Naive thymus-derived CD4-positive, alpha-beta T cell (primary cell): ENCODE measurements at regions of chr3 and their contacts with region 1.

Region 1: DNA sequence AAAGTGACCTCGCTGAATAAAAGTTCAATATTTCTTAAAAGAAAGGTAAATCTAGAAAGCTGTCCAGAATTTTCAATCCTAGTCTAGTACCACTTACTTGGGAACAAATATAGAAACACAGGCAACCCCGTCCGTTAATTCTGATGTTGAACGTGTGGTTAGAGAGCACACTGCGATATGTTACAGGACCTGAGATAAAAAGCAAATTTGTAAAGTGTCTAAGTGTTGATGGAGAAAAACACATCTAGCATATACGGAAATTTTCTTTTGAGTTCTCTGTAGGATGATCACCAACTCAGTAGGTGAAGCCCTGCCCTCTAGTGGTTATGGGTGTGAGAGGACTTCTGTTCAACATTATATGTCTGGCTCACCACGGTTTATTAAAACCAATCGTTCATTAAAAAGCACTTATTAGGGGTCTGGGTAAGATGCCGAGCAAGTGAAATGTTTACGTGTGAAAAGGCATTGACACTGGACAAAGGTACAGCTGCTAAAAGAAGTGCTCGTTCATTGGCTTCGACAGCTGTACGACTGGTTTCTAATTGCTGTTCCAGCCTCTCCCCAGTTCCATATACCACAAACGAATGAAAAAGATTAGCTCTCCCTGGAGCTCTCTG is 1.0 kb upstream of the ATP2C1 start:
- DNase-seq: peak in 8 of 9 donors; percentile 55 to 82 (median 76)
- ATAC-seq: peak; percentile 77
- H3K4me3 ChIP-seq: peak overlapping the region; percentile 96
- H3K4me3 Mint-ChIP-seq: peak overlapping the region; percentile 94 to 99 (median 98)
- H3K27ac ChIP-seq: peak overlapping the region; percentile 93
- H3K27ac Mint-ChIP-seq: peak overlapping the region; percentile 95 to 100 (median 99)
- H3K4me1 ChIP-seq: peaks cover 5 to 14% of the 10 kb centered on the region in 2 donors
- H3K4me1 Mint-ChIP-seq: peaks cover 25 to 45% (median 37%) of the 10 kb centered on the region in 7 donors
- H3K27me3 ChIP-seq: no peaks in the 10 kb centered on the region
- H3K27me3 Mint-ChIP-seq: peaks cover 0 to 4% (median 0%) of the 10 kb centered on the region in 5 donors

Region 2: DNA sequence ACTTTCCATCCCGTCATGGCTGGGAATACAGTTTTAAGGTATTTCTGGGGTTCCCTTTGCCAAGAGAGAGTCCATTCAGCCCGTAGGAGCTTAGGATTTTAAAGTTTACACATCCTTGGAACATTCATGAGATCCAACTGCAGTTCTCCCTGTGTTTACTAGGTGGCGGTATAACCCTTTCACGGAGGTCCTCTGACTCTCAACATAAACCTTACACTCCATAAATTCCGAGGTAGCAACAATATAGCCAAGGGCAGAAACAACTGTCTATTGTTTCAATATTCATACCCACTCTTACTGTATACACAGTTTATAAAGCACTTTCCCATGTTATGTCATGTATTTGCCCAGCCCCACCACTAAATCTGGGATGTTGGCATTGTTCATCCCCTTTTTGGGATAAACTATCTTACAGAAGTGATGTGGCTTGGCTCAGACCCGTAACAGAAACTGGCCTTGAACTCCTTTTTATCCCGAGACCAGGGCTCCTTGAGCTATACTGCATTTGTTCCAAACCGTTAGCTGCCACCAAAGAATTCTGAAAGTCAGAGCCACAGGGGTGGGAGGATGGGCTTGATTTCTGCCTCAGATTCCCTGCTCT is 616.6 kb before region 1 on chr3:
- CTCF ChIA-PET with region 1: no interaction called
- POLR2A ChIA-PET with region 1: no interaction called
- intact Hi-C with region 1: loop called (anchors 1 to 5 kb)
- DNase-seq: peak in 3 of 9 donors; percentile 2 to 4 (median 2)
- ATAC-seq: peak; percentile 46
- H3K4me3 ChIP-seq: no peak overlapping the region
- H3K4me3 Mint-ChIP-seq: no peak overlapping the region
- H3K27ac ChIP-seq: no peak overlapping the region
- H3K27ac Mint-ChIP-seq: no peak overlapping the region
- H3K4me1 ChIP-seq: no peaks in the 10 kb centered on the region
- H3K4me1 Mint-ChIP-seq: no peaks in the 10 kb centered on the region
- H3K27me3 ChIP-seq: no peaks in the 10 kb centered on the region
- H3K27me3 Mint-ChIP-seq: peaks cover 8 to 48% (median 36%) of the 10 kb centered on the region in 5 donors

Region 3: DNA sequence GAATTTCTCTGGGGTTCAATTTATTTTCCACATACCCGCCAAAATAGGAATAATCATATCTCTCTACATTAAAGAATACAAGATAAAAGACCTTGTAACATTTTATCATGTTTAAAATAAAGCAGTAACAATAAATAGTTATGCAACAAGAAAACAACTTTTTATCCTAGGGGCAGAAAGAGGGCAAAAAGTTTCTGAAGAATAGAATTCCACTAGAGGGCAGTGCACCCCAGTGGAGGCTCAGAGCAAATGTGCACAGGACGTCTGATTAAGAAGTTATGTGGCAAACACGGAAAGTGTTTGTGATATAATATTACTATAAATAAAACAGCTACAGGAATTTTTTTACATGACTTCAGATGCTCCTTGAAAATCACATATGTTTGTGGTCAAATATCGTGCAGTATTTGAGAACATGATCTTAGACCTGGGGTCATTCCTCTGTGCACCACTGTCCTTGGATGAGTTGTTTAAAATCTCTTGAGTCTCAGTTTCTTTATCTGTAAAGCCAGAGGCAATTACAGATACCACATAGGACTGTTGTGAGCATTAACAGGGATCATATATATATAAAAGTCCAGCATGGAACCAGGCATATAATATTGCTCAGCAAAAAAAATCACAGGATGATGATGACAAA is 133.0 kb before region 1 on chr3:
- CTCF ChIA-PET with region 1: interaction called, 12 read pairs
- POLR2A ChIA-PET with region 1: interaction called, 8 read pairs
- intact Hi-C with region 1: loop called (anchors 1 kb)
- DNase-seq: peak in 8 of 9 donors; percentile 27 to 65 (median 50)
- ATAC-seq: peak; percentile 89
- H3K4me3 ChIP-seq: no peak overlapping the region
- H3K4me3 Mint-ChIP-seq: no peak overlapping the region
- H3K27ac ChIP-seq: no peak overlapping the region
- H3K27ac Mint-ChIP-seq: peak overlapping the region in 1 of 9 donors; percentile 68
- H3K4me1 ChIP-seq: no peaks in the 10 kb centered on the region
- H3K4me1 Mint-ChIP-seq: peaks cover 0 to 10% (median 0%) of the 10 kb centered on the region in 7 donors
- H3K27me3 ChIP-seq: no peaks in the 10 kb centered on the region
- H3K27me3 Mint-ChIP-seq: peaks cover 0 to 20% (median 6%) of the 10 kb centered on the region in 5 donors

Region 4: GRCh38 chr3:130935761-130936492 is 43.1 kb after region 1 on chr3:
- CTCF ChIA-PET with region 1: no interaction called
- POLR2A ChIA-PET with region 1: interaction called, 3 read pairs
- intact Hi-C with region 1: loop called in 1 of 2 experiments (anchors 5 kb)
- DNase-seq: no peak
- ATAC-seq: no peak
- H3K4me3 ChIP-seq: no peak overlapping the region
- H3K4me3 Mint-ChIP-seq: no peak overlapping the region
- H3K27ac ChIP-seq: no peak overlapping the region
- H3K27ac Mint-ChIP-seq: no peak overlapping the region
- H3K4me1 ChIP-seq: no peaks in the 10 kb centered on the region
- H3K4me1 Mint-ChIP-seq: peaks cover 0 to 9% (median 0%) of the 10 kb centered on the region in 7 donors
- H3K27me3 ChIP-seq: no peaks in the 10 kb centered on the region
- H3K27me3 Mint-ChIP-seq: no peaks in the 10 kb centered on the region

Region 5: DNA sequence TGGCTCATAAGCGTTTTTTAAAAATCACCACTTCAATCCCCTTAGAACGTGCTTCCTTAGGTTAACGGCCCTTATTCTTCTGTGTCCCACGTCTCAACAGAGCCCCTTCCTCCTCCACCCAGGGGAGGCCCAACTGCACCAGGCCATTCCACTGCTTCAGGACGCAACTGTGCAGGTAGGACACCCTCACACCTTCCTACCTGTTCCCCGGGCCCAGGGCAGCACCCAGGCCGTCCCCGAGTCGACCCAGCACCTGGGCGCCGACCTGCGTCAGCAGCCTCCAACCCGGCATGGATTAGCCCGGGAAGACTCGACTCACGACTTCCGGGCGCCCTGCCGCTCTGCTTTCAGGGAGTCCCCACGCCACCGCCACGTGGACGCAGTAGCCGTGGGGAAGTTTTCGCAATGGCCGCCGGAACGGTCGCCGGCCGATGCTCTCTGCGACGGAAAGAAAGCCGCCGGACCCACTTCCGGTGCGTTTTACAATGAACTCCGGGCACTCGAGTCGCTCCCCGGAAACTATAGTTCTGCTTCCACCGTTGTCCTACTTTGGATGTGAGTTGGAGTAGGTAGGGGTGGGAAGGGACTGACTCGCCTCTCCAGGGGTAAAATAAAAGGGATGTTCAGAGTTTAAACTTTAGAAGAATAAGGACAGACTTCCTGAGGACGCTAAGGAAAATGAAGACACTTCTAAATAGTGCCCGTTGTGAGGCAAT is 609.8 kb after region 1 on chr3 and contains the start of gene MRPL3:
- CTCF ChIA-PET with region 1: no interaction called
- POLR2A ChIA-PET with region 1: no interaction called
- intact Hi-C with region 1: loop called (anchors 1 to 5 kb)
- DNase-seq: peak; percentile 68 to 82 (median 78)
- ATAC-seq: peak; percentile 90
- H3K4me3 ChIP-seq: peak within 1 kb of the TSS; percentile 79
- H3K4me3 Mint-ChIP-seq: peak within 1 kb of the TSS; percentile 94 to 100 (median 98)
- H3K27ac ChIP-seq: peak within 1 kb of the TSS; percentile 72
- H3K27ac Mint-ChIP-seq: peak within 1 kb of the TSS; percentile 86 to 98 (median 96)
- H3K4me1 ChIP-seq: peaks cover 23% of the 10 kb centered on the region in 2 donors
- H3K4me1 Mint-ChIP-seq: peaks cover 15 to 65% (median 53%) of the 10 kb centered on the region in 7 donors
- H3K27me3 ChIP-seq: no peaks in the 10 kb centered on the region
- H3K27me3 Mint-ChIP-seq: no peaks in the 10 kb centered on the region
- total RNA-seq, gene MRPL3: 33.8 to 79.2 (median 52.7) TPM